ENCODE measurements at regions of chr20 and their contacts with region 1.

Region 1: DNA sequence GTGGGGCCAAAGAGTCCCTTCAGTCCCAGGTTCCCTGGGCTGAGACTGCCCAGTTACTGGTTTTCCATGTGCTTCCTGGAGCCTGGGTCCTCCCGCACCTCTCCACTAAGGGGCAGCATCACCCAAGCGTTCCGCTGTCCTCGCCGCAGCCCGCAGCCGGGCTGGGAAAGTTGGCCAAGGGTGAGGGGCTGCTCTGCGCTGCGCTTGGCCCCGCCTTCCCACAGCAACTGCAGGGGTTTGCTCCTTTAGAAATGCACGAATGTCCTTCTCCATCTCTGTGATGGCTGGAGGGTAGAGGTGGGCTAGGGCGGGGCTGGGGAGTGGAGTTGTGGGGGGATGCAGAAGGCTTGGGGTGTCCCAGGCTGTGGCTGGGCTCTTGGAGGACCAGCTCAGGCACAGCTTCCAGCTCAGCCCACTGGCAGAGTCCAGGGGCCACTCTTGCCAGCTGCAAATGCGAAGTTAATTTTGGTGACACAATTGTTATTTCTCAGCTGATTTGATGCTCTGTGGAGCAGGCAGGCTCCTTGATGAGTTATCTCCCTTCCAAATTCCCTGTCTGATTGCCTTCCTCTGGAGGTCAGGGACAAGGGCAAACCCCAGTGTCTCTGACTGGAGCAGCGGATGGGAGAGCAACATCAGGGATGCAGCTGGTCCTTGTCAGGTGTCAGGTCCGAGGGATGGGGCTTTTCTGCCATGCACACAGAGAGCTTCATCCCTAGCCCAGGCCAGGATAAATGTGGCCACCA is 63.2 kb downstream of the NOL4L start:
- DNase-seq: peak; percentile 55 to 90 (median 80)
- ATAC-seq: peak; percentile 74 to 91 (median 87)
- H3K4me3 ChIP-seq: no peak overlapping the region
- H3K27ac ChIP-seq: no peak overlapping the region
- H3K4me1 ChIP-seq: peaks cover 4 to 22% (median 6%) of the 10 kb centered on the region in 3 donors
- H3K27me3 ChIP-seq: no peaks in the 10 kb centered on the region
- CTCF ChIP-seq: peak; percentile 73 to 85 (median 80)

Region 2: DNA sequence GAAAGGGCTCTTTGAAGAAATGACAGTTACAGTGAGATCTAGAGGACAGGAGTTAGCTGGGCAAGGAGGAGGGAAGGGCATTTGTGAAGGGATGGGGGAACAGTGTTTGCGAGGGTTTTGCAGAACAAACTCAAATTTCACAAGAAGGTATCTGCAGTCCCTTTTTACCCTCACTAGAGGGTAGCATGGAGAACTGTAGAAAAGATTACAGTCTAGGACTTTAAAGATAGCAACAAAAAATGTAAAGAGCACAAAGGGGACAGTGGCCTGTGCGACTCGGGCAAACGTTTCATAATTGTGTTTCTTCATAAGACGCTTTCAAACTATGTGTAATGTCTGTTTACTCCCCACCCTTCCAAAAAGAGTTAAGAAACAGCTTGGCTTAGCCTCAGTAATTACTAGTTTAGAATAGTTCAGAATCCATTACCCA is 185.0 kb before region 1 on chr20:
- intact Hi-C with region 1: no loop called
- DNase-seq: no peak
- ATAC-seq: peak in 3 of 4 donors; percentile 12 to 38 (median 36)
- H3K4me3 ChIP-seq: no peak overlapping the region
- H3K27ac ChIP-seq: no peak overlapping the region
- H3K4me1 ChIP-seq: peaks cover 24 to 40% (median 27%) of the 10 kb centered on the region in 3 donors
- H3K27me3 ChIP-seq: no peaks in the 10 kb centered on the region
- CTCF ChIP-seq: peak in 3 of 4 donors; percentile 19 to 37 (median 35)

Region 3: GRCh38 chr20:32484958-32485769 is 36.8 kb before region 1 on chr20:
- intact Hi-C with region 1: no loop called
- DNase-seq: peak in 4 of 6 donors; percentile 65 to 76 (median 72)
- ATAC-seq: peak; percentile 34 to 68 (median 57)
- H3K4me3 ChIP-seq: peak overlapping the region in 2 of 4 donors; percentile 52 to 80
- H3K27ac ChIP-seq: peak overlapping the region in 3 of 4 donors; percentile 64 to 88 (median 81)
- H3K4me1 ChIP-seq: peaks cover 5 to 20% (median 10%) of the 10 kb centered on the region in 3 donors
- H3K27me3 ChIP-seq: no peaks in the 10 kb centered on the region
- CTCF ChIP-seq: peak; percentile 50 to 80 (median 61)

Region 4: GRCh38 chr20:32652739-32653526 is 131.0 kb after region 1 on chr20:
- intact Hi-C with region 1: loop called (anchors 2 to 10 kb)
- DNase-seq: peak; percentile 69 to 93 (median 84)
- ATAC-seq: peak; percentile 94 to 100 (median 98)
- H3K4me3 ChIP-seq: no peak overlapping the region
- H3K27ac ChIP-seq: no peak overlapping the region
- H3K4me1 ChIP-seq: no peaks in the 10 kb centered on the region
- H3K27me3 ChIP-seq: no peaks in the 10 kb centered on the region
- CTCF ChIP-seq: peak; percentile 78 to 96 (median 86)

Region 5: DNA sequence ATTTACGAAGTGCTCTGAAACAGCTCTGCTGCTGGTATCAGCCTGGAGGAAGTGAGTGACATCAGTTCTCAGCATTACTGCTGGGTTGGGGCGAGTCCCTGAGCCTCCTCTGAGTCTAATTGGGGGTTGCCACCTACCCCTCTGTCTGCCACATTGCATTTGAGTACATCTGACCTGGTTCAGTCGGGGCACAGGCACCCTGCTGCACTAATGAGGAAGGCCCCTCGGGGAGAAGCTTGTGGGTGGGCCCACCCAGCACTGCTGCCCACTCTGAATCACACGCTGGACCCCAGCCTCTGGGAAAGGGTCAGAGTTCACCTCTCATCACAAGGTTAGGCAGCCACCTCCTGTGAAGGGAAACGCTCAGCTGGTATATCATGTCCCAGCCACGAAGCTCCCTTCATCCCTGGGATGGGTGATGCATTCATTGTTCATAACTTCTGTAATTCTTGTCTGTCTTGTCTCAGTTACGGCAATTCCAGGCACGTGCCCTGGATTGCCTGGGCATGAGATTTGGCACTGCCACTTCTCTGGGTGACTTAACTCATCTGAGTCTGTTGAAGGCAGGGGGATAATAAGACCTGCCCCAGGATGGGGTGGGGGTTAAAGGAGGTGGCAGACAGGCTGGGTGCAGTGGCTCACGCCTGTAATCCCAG is 253.5 kb after region 1 on chr20:
- intact Hi-C with region 1: no loop called
- DNase-seq: no peak
- ATAC-seq: no peak
- H3K4me3 ChIP-seq: no peak overlapping the region
- H3K27ac ChIP-seq: no peak overlapping the region
- H3K4me1 ChIP-seq: peaks cover 13 to 28% (median 25%) of the 10 kb centered on the region in 3 donors
- H3K27me3 ChIP-seq: no peaks in the 10 kb centered on the region
- CTCF ChIP-seq: no peak